ENCODE measurements at regions of chr6 and their contacts with region 1.

Region 1: GRCh38 chr6:30877419-30878371 is 6.6 kb upstream of the DDR1 start:
- DNase-seq: peak; percentile 91 to 93
- H3K4me3 ChIP-seq: peak overlapping the region; percentile 26 to 33
- H3K27ac ChIP-seq: peak overlapping the region; percentile 85 to 89
- H3K4me1 ChIP-seq: peaks cover 0 to 5% of the 10 kb centered on the region in 2 donors
- H3K27me3 ChIP-seq: no peaks in the 10 kb centered on the region
- CTCF ChIP-seq: peak; percentile 91 to 95 (median 92)
- POLR2A ChIP-seq: no peak

Region 2: DNA sequence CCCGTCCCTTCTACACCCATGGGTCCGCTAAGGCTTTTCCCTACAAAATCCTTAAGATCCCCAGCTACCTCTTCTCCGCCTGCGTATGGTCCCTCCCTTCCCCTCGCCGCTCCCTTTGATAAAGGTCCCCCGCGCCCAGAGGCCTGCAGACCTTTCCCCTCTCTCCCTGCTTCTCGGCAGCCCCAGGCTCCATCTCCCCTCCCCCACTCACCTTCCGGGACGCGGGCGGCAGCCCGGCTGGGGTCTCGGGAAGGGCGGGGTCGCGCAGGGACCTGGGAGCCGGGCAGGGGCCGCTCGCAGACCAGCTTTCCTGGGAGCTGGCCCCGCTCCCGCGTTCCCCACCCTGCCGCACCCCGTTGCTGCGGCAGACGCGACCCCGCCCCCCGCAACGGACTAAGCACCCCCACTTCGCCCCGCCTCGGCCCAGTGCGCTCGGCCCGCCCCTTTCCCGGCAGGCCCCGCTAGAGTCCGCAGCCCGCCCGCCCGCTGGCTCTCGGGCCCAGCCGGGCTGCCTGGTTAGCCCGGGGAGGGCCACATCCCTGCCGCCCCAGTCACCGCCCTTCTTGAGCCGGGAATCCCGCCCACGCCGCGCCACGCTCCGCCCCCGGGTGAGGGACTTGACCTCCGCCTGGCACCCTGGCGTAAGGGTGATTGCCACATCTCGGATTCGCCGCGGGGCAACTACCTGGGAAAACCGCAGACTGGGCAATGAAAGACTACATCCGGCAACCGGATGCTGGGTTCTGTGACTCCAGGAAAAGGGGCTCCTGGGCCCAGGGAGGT is 135.2 kb before region 1 on chr6 and contains the start of gene FLOT1:
- intact Hi-C with region 1: loop called (anchors 5 kb)
- DNase-seq: peak; percentile 96
- H3K4me3 ChIP-seq: peak within 1 kb of the TSS; percentile 81 to 88
- H3K27ac ChIP-seq: peak within 1 kb of the TSS; percentile 96 to 99
- H3K4me1 ChIP-seq: peaks cover 8 to 12% of the 10 kb centered on the region in 2 donors
- H3K27me3 ChIP-seq: no peaks in the 10 kb centered on the region
- CTCF ChIP-seq: peak in 2 of 4 experiments; percentile 1 to 12
- POLR2A ChIP-seq: peak; percentile 60 to 67
- total RNA-seq, gene FLOT1: 47.1 to 155 (median 64.6) TPM

Region 3: DNA sequence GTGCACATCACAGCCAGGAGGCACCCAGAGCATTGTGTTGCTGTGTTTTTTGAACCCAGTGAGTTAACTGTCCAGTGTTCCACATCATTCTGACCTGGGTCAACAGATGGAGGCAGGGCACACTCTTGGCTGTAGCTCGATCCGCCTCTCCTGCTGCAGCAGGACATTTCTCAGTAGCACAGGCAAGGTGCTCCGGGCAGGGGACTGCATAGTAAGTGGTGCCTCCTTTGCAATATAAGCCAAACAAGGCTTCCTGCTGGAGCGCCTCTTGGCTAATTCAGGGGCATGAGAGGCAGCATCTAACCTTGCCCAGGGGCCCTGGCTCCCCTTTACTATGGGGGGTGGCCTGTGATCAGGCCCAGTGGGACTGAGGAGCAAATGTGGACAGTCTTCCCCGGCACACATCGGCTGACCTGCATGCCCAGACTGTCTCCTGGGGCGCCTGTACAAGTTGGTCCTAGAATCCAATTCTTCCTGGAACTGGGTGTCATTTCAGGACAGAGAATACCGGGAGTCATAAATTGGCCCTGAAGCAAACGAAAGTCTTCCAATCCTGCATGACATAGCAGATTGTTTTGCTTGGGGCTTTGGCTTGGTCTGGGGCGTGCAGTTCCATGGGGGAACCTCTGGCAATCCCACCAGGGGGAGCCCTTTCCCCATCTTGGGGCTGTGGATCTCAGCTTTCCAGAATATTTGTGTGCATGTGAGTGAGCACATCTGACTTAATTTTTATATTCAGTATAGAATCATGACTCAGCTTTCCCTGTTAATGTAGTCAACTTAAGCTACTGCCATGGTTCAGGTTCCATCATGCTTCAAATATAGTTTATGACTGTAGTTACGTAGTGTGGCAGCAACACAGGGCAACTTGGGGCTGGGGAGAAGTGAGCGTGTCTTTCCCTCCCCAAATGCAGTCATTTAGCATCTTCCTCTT is 49.4 kb before region 1 on chr6:
- intact Hi-C with region 1: loop called (anchors 5 kb)
- DNase-seq: peak; percentile 90 to 91
- H3K4me3 ChIP-seq: no peak overlapping the region
- H3K27ac ChIP-seq: peak overlapping the region; percentile 54 to 59
- H3K4me1 ChIP-seq: no peaks in the 10 kb centered on the region
- H3K27me3 ChIP-seq: no peaks in the 10 kb centered on the region
- CTCF ChIP-seq: peak; percentile 94 to 99 (median 95)
- POLR2A ChIP-seq: no peak

Measured in uterus (tissue), 4 donors.